ENCODE measurements at regions of chr11 and their contacts with region 1.

Region 1: DNA sequence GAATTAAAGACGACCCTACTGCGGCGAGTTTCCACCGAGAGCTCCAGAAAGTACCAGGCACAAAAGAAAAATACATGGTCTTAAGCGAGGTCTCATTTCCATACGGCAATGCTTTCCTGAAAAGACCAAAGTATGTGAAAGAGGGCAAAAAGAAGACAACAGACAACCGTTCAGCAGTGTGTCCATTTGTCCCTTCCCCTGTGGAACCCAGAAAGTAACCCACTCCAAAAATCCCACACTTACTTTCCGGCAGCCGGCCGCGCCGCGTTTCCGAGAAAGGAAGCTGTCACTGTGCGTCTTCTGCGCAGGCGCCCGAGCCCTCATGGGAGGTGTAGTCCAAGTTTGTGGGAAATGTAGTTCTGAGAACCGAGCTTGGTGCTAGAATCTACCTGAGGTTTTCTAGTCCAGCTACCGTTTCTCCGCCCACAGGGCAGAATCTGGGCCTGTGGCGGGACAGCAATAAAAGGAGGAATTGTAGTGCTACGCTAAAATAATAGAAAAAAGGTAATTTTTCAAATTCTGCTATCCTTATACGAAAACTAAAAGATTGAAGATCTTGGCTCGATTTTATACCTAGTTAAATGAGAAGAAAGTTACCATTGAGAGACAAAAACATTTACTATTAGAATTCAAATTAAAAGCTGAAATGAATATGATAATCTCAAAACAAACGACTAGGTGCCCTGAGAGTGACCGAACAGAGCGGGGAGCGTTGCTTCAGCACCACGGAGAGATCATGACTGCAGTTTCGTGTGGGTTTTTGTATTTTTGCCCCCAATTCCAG is at the start of gene PUS3:
- DNase-seq: peak; percentile 93

Region 2: DNA sequence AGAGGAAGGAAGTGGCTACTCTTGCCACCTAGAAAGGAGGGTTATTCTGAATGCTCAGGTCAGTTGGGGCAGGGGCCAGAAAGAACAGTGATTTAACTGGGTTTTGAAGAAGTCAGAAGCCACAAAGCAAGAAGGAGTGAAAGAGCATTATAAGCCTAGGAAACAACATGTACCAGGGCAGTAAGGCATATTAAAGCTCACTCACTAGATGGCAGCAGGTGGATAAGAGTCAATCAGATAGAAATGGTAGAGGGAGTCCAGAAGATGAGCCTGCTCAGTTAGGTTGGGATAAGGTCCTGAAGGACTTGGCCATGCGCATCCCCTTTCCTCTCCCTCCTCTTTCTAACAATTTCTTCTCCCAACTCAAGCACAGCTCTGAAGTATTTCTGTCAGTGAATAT is 179.0 kb before region 1 on chr11:
- CTCF ChIA-PET with region 1: no interaction called
- POLR2A ChIA-PET with region 1: no interaction called
- DNase-seq: no peak

Region 3: DNA sequence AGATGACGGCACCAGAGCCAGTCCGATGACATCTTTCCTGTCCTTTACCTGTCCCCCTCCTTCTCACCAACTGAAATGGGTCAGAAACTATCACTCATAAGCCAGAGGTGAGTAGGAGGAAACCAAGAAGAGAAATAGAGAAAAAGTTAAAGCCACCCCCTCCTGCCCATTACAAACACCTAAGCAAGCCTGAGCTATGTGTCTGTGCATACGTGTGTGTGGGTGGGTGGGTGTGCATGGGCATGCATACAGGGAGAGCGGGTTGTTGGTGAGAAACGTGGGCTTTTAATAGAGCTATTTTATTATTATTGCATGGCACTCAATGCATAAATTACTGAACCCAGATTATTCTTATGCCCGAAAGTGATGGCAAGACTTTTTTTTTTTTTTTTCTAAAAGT is 67.4 kb before region 1 on chr11:
- CTCF ChIA-PET with region 1: no interaction called
- POLR2A ChIA-PET with region 1: no interaction called
- DNase-seq: no peak

Region 4: GRCh38 chr11:125887373-125888324 is 15.5 kb before region 1 on chr11 and contains the start of gene HYLS1:
- CTCF ChIA-PET with region 1: interaction called, 5 read pairs
- POLR2A ChIA-PET with region 1: interaction called, 28 read pairs
- DNase-seq: peak; percentile 86

Region 5: GRCh38 chr11:125918140-125918840 is 15.2 kb after region 1 on chr11:
- CTCF ChIA-PET with region 1: interaction called, 3 read pairs
- POLR2A ChIA-PET with region 1: interaction called, 13 read pairs
- DNase-seq: no peak

Region 6: GRCh38 chr11:125952973-125953372 is 49.9 kb after region 1 on chr11:
- CTCF ChIA-PET with region 1: no interaction called
- POLR2A ChIA-PET with region 1: no interaction called
- DNase-seq: no peak